IMR-90 (cell line): ENCODE measurements at regions of chr5 and their contacts with region 1.

Region 1: DNA sequence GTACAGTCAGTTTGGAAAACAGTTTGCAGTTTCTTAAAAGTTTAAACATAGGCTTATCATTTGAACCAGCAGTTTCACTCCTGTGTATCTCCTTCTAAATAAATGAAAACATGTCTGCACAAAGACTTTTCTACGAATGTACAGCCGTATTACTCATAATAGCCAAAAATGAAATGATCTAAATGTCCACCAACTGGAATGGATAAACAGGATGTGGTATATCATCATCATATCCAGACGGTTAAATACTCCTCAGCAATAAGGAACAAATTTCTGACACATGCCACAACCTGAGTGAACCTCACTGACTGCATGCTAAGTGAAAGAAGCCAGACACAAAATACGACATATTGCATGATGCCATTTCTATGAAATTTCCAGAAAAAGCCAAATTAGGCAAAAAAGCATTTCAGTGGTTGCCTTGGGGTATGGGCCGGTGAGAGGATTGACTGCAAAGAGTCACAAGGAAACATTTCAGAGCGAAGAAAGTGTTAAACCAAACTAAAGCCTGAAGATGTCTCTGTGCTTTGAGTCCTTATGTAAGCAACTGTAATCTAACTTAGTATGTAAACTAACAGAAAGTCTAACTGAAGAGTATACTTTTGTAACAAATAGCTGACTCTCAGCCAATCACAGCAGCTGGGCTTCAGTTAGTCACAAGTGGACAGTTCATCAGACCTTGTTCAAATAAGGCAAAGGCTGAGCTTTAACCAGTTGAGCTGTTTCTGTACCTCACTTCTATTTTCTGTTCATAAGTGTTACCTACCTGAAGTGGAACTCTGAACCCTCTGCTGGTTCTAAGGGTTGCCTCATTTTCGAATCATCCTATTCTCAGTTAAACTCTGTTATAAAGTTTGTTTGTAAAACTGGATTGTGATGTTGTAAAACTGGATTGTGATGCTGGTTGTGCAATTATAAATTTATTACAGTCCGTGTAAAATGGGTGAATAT is 65.2 kb downstream of the TRIO start:
- DNase-seq: peak; percentile 94
- ATAC-seq: peak; percentile 73
- H3K4me3 ChIP-seq: peak overlapping the region; percentile 4; the same call in 1 of the 2 replicates
- H3K27ac ChIP-seq: peak overlapping the region; percentile 95
- H3K4me1 ChIP-seq: peaks cover 43% of the 10 kb centered on the region
- H3K27me3 ChIP-seq: no peaks in the 10 kb centered on the region
- CTCF ChIP-seq: no peak
- POLR2A ChIP-seq: no peak; the same call in none of the 2 replicates
- RAD21 ChIP-seq: peak; percentile 7

Region 2: DNA sequence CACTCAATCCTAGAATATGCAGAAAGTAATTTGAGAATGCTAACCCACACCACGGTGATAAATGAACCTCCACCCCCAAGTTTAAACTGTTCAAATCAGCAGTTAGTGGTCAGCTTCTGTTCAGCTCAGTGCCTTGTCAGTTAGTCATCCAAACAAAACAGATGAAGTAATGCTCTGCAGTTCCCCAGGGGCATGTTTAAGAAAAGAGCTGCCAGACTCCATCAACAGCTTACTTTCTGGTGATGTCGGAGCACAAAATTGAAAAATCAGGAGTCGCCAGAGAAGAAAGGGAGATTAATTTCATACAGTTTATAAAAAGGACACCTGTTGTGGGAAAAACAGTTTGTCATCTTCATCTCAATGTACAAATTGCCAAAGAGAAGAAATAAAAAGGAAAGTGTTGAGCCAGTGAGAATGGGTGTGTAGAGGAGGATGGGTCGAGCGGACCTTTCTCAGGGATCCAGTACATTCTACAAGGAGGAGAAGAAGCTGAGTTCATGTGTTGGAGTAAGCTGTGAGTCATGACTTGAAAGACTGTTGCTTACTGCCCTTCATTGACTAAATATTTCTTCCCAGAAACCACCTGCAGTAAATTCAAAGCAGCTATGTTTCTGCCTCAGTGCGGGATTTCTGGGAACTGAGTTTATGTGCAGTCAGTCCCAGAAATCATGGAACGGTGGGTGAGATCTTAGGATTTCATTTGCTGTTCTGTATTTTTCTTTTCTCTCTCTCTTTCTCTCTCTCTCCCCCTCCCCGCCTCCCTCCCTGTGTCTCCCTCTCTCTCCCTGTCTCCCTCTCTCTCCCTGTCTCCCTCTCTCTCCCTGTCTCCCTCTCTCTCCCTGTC is 51.5 kb before region 1 on chr5:
- CTCF ChIA-PET with region 1: interaction called, 3 read pairs
- POLR2A ChIA-PET with region 1: no interaction called
- dilution Hi-C with region 1: no loop called
- in situ Hi-C with region 1: no loop called
- intact Hi-C with region 1: loop called (anchors 1 kb)
- DNase-seq: peak; percentile 99
- ATAC-seq: peak; percentile 75
- H3K4me3 ChIP-seq: peak overlapping the region; percentile 38
- H3K27ac ChIP-seq: peak overlapping the region; percentile 96
- H3K4me1 ChIP-seq: peaks cover 43% of the 10 kb centered on the region
- H3K27me3 ChIP-seq: no peaks in the 10 kb centered on the region
- CTCF ChIP-seq: no peak
- POLR2A ChIP-seq: no peak
- RAD21 ChIP-seq: peak; percentile 11; the same call in 1 of the 2 replicates

Region 3: DNA sequence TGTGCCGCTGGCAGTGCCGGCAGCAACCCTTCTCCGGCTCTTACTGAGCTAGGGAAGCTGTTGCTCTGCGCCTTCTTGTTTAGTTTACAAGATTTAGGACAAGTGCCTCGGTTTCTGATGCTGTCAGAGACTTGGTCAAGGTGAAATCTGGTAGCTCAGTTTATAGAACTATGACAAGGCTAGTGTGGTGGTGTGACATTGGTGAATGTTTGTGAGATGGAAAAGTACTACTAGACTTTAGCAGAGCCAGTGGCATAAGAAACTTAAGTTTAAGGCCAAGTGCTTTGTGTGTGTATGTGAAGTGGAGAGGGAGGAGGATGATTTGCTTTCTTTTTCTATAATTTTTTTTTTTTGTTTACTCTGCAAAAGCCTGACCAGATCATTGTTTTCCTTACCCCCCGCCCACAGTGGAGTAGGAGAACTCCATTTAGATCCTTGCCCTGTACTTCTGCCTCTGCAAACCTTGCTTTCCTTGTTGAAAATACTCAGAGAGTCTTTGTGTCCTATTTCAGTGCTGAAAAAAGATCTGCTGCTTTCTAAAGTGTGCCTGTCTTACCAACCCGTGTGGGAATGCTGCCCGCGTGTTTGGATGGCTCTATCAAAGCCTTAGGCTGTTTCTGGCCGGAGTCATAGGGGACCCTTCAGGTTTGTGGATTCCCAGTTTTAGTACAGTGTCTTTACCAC is 10.7 kb after region 1 on chr5:
- CTCF ChIA-PET with region 1: no interaction called
- POLR2A ChIA-PET with region 1: no interaction called
- dilution Hi-C with region 1: no loop called
- in situ Hi-C with region 1: no loop called
- intact Hi-C with region 1: no loop called
- DNase-seq: peak; percentile 26
- ATAC-seq: 0 out of 2 replicates have a peak, but pooled peaks have one; percentile 9
- H3K4me3 ChIP-seq: no peak overlapping the region
- H3K27ac ChIP-seq: peak overlapping the region; percentile 2; the same call in 1 of the 2 replicates
- H3K4me1 ChIP-seq: peaks cover 45% of the 10 kb centered on the region
- H3K27me3 ChIP-seq: no peaks in the 10 kb centered on the region
- CTCF ChIP-seq: no peak
- POLR2A ChIP-seq: no peak
- RAD21 ChIP-seq: no peak

Region 4: DNA sequence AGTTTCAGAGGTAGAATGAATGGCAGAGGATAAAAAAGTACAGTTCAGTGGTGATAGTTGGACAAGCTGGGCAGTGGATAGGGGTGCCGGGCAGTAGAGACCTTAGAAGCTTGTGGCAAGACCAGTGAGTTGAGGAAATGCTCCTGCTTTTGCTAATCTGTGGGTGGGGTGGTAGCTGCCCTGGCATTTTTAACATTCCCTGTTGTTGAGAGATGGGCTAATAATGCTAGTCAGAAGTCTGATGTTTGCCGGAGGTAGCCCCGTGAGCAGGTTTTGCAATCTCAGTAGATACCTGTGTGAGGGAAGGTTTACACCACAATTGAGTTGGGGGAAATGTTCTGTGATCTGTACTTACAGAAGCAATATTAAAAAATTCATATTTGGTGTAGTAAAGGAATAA is 25.9 kb after region 1 on chr5:
- CTCF ChIA-PET with region 1: no interaction called
- POLR2A ChIA-PET with region 1: no interaction called
- dilution Hi-C with region 1: no loop called
- in situ Hi-C with region 1: no loop called
- intact Hi-C with region 1: no loop called
- DNase-seq: no peak
- ATAC-seq: no peak
- H3K4me3 ChIP-seq: no peak overlapping the region
- H3K27ac ChIP-seq: peak overlapping the region; percentile 3; the same call in 1 of the 2 replicates
- H3K4me1 ChIP-seq: peaks cover 37% of the 10 kb centered on the region
- H3K27me3 ChIP-seq: no peaks in the 10 kb centered on the region
- CTCF ChIP-seq: no peak
- POLR2A ChIP-seq: no peak
- RAD21 ChIP-seq: no peak

Region 5: GRCh38 chr5:14264604-14265316 is 56.4 kb after region 1 on chr5:
- CTCF ChIA-PET with region 1: no interaction called
- POLR2A ChIA-PET with region 1: no interaction called
- dilution Hi-C with region 1: no loop called
- in situ Hi-C with region 1: no loop called
- intact Hi-C with region 1: loop called (anchors 1 kb)
- DNase-seq: peak; percentile 94
- ATAC-seq: peak; percentile 69
- H3K4me3 ChIP-seq: no peak overlapping the region
- H3K27ac ChIP-seq: peak overlapping the region; percentile 83
- H3K4me1 ChIP-seq: peaks cover 50% of the 10 kb centered on the region
- H3K27me3 ChIP-seq: no peaks in the 10 kb centered on the region
- CTCF ChIP-seq: no peak
- POLR2A ChIP-seq: peak; percentile 65
- RAD21 ChIP-seq: no peak

Region 6: DNA sequence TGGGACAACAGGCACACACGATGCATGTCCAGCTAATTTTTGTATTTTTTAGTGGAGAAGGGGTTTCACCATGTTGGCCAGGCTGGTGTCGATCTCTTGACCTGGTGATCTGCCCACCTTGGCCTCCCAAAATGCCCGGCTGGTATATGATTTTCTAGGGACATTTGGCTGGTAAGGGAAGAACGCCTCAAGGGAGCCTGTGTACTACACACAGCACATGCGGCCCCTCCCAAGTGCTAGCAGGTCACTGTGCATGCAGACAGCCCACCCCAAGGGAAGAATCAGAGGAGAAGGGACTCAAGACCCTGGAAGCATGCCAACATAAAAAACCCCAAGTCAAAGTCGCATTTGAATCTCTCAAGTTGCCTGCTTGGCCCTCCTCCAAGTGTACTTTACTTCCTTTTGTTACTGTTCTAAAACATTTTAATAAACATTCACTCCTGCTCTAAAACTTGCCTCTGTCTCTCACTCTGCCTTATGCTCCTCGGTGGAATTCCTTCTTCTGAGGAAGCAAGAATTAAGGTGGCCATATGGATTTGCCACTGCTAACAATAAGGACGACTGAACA is 348.9 kb after region 1 on chr5:
- CTCF ChIA-PET with region 1: no interaction called
- POLR2A ChIA-PET with region 1: no interaction called
- dilution Hi-C with region 1: no loop called
- in situ Hi-C with region 1: no loop called
- intact Hi-C with region 1: no loop called
- DNase-seq: no peak
- ATAC-seq: no peak
- H3K4me3 ChIP-seq: no peak overlapping the region
- H3K27ac ChIP-seq: no peak overlapping the region
- H3K4me1 ChIP-seq: no peaks in the 10 kb centered on the region
- H3K27me3 ChIP-seq: peaks cover 32% of the 10 kb centered on the region
- CTCF ChIP-seq: no peak
- POLR2A ChIP-seq: no peak
- RAD21 ChIP-seq: no peak